ENCODE measurements at regions of chr1 and their contacts with region 1.

Region 1: GRCh38 chr1:165073185-165074007 is 283.1 kb downstream of the LMX1A start:
- DNase-seq: peak; percentile 57
- H3K4me3 ChIP-seq: no peak overlapping the region
- H3K27ac ChIP-seq: no peak overlapping the region
- H3K4me1 ChIP-seq: no peaks in the 10 kb centered on the region
- H3K27me3 ChIP-seq: no peaks in the 10 kb centered on the region
- CTCF ChIP-seq: peak; percentile 29 to 52
- POLR2A ChIP-seq: no peak

Region 2: GRCh38 chr1:163410073-163410999 is 1663.1 kb before region 1 on chr1:
- CTCF ChIA-PET with region 1: interaction called, 13 read pairs
- POLR2A ChIA-PET with region 1: no interaction called
- dilution Hi-C with region 1: no loop called
- intact Hi-C with region 1: loop called (anchors 1 kb)
- DNase-seq: peak; percentile 66
- H3K4me3 ChIP-seq: no peak overlapping the region
- H3K27ac ChIP-seq: no peak overlapping the region
- H3K4me1 ChIP-seq: no peaks in the 10 kb centered on the region
- H3K27me3 ChIP-seq: peaks cover 0 to 2% of the 10 kb centered on the region in 2 experiments
- CTCF ChIP-seq: peak; percentile 67 to 72
- POLR2A ChIP-seq: no peak

Region 3: GRCh38 chr1:163535807-163536206 is 1537.6 kb before region 1 on chr1:
- CTCF ChIA-PET with region 1: interaction called, 10 read pairs
- POLR2A ChIA-PET with region 1: no interaction called
- dilution Hi-C with region 1: no loop called
- intact Hi-C with region 1: no loop called
- DNase-seq: peak; percentile 30
- H3K4me3 ChIP-seq: no peak overlapping the region
- H3K27ac ChIP-seq: no peak overlapping the region
- H3K4me1 ChIP-seq: no peaks in the 10 kb centered on the region
- H3K27me3 ChIP-seq: peaks cover 0 to 3% of the 10 kb centered on the region in 2 experiments
- CTCF ChIP-seq: no peak
- POLR2A ChIP-seq: no peak

Region 4: GRCh38 chr1:164092603-164093353 is 980.6 kb before region 1 on chr1:
- CTCF ChIA-PET with region 1: no interaction called
- POLR2A ChIA-PET with region 1: no interaction called
- dilution Hi-C with region 1: no loop called
- intact Hi-C with region 1: loop called (anchors 5 kb)
- DNase-seq: no peak
- H3K4me3 ChIP-seq: no peak overlapping the region
- H3K27ac ChIP-seq: no peak overlapping the region
- H3K4me1 ChIP-seq: no peaks in the 10 kb centered on the region
- H3K27me3 ChIP-seq: no peaks in the 10 kb centered on the region
- CTCF ChIP-seq: peak; percentile 9 to 33
- POLR2A ChIP-seq: no peak

Region 5: DNA sequence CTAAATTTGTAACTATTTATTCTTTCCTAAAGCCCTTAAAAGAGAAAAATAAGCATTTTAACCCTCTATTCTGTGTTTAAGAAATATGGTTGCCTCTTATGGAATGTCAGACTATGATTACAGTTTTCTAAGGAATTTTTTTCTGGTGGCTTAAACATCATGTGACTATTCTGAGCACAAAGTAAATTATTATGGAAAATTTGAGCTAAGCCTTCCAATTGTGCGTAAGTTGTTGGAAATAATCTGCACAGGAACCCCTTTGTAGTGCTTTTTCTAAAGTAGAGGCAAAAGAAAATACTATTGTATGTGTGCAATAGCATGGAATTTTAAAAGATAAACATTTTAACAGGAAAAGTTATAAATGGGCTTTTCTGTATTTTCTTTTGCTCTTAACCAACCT is 259.6 kb before region 1 on chr1:
- CTCF ChIA-PET with region 1: no interaction called
- POLR2A ChIA-PET with region 1: no interaction called
- dilution Hi-C with region 1: no loop called
- intact Hi-C with region 1: loop called (anchors 10 kb)
- DNase-seq: peak; percentile 48
- H3K4me3 ChIP-seq: no peak overlapping the region
- H3K27ac ChIP-seq: no peak overlapping the region
- H3K4me1 ChIP-seq: no peaks in the 10 kb centered on the region
- H3K27me3 ChIP-seq: no peaks in the 10 kb centered on the region
- CTCF ChIP-seq: no peak
- POLR2A ChIP-seq: no peak

Measured in endothelial cell of umbilical vein (primary cell).